Mammary epithelial cell (primary cell): ENCODE measurements at regions of chr18 and their contacts with region 1.

Region 1: DNA sequence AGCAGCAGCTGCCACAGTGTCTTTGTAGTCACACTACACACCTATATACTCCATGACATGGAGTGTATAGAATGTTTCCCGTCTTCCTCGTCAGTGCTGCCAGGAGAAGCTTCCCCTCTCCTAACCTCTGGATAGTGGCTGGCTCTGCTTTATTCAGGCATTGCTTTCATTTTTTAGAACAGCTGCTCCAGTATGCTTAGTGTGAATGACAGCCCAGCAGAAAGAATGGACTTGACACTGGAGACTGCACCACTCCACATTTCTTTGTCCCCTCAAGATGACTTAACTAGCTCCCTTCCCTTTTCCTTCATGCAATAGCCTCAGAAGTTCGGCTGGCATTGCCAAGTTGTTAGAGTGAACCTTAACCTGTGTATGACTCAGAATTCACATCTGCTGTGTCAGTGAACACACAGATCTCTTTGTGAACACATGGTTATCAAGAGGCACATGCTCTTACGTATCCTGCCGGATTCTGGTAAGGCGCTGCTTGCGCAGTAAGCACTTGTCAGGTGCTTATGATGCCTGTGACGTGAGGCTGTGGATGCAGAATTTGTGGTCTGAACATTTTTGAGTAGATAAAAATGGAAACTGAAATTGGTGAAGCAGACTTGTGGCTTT is 73.9 kb downstream of the NEDD4L start:
- DNase-seq: peak; percentile 94
- H3K4me3 ChIP-seq: no peak overlapping the region
- H3K27ac ChIP-seq: peak overlapping the region; percentile 35
- H3K4me1 ChIP-seq: peaks cover 14% of the 10 kb centered on the region
- H3K27me3 ChIP-seq: no peaks in the 10 kb centered on the region
- CTCF ChIP-seq: no peak

Region 2: GRCh38 chr18:57630002-57630753 is 487.7 kb before region 1 on chr18:
- CTCF ChIA-PET with region 1: no interaction called
- dilution Hi-C with region 1: no loop called
- in situ Hi-C with region 1: loop called in 1 of 2 experiments (anchors 25 kb)
- intact Hi-C with region 1: loop called (anchors 1 kb)
- DNase-seq: peak; percentile 93
- H3K4me3 ChIP-seq: peak overlapping the region; percentile 64 to 79 (median 68)
- H3K27ac ChIP-seq: peak overlapping the region; percentile 45
- H3K4me1 ChIP-seq: peaks cover 14% of the 10 kb centered on the region
- H3K27me3 ChIP-seq: no peaks in the 10 kb centered on the region
- CTCF ChIP-seq: peak; percentile 53 to 82

Region 3: GRCh38 chr18:57959278-57959677 is 158.6 kb before region 1 on chr18:
- CTCF ChIA-PET with region 1: interaction called, 9 read pairs
- dilution Hi-C with region 1: no loop called
- in situ Hi-C with region 1: no loop called
- intact Hi-C with region 1: loop called (anchors 1 kb)
- DNase-seq: peak; percentile 72
- H3K4me3 ChIP-seq: no peak overlapping the region
- H3K27ac ChIP-seq: no peak overlapping the region
- H3K4me1 ChIP-seq: no peaks in the 10 kb centered on the region
- H3K27me3 ChIP-seq: no peaks in the 10 kb centered on the region
- CTCF ChIP-seq: peak; percentile 39 to 51

Region 4: DNA sequence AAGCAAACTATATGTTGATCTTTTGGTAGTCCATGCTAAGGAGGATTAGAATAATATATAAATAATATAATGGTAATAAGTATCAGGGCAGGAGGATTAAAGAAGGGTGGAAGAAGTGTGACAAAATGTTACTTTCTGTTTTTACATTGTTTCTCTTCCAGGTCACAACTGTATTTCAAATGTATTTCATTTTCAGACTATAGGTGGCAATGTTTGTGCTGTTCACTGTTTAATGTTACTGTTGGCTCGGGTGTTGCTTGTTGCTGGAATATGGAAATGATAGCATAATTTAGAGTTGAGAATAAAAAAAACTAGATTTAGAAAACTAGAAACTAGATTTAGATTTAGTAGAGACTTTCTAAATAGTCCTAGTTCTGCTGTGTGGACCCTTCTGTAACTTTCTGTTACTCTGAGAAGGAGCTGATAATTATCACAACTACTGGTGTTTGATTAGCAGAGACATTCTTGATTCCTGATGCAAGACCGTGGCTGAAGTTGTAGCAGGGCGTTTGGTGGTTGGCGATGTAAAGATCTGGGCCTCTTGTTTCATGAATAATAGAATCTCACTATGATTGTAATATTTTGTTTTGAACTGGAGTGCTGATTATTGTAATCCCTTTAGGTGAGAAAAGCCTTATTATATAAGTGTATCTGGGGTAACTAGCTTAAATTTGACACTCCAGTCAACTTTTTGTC is 66.0 kb before region 1 on chr18:
- CTCF ChIA-PET with region 1: no interaction called
- dilution Hi-C with region 1: loop called (anchors 5 kb)
- in situ Hi-C with region 1: loop called (anchors 5 kb)
- intact Hi-C with region 1: no loop called
- DNase-seq: peak; percentile 32
- H3K4me3 ChIP-seq: no peak overlapping the region
- H3K27ac ChIP-seq: no peak overlapping the region
- H3K4me1 ChIP-seq: peaks cover 25% of the 10 kb centered on the region
- H3K27me3 ChIP-seq: no peaks in the 10 kb centered on the region
- CTCF ChIP-seq: peak; percentile 29 to 45

Region 5: DNA sequence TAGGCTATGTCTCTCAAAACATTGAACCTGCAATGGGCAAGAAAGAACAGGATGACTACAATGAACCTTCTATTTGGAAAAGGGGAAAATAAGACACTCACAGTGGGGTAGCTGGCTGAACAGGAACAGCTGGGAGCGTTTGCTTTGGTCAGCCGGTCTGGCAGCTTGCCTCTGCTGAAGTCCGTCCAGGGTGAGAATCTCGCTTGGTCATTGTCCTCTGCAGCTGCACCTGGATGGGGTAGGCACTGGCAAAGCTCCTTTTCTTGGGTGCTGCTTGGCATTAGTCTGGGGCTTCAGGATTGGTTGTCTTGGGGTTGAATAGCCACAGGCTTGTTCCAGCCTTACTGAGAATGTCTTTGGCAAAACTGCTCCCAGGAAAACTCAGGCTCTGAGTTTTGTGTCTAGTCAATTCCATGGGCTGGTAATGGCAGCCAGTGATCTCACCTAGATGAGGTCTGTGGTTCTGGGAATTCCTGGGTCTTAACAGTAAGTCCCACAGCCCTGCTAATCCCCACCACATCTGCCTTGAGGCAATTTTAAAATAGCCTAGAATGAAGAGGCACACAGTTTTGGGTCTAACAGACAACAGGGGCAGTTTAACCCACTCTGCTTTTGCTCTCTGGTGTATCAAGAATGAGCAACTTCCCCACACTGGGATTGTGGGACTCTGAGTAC is 60.5 kb before region 1 on chr18:
- CTCF ChIA-PET with region 1: no interaction called
- dilution Hi-C with region 1: loop called (anchors 5 kb)
- in situ Hi-C with region 1: loop called in 1 of 2 experiments (anchors 5 kb)
- intact Hi-C with region 1: no loop called
- DNase-seq: peak; percentile 73
- H3K4me3 ChIP-seq: no peak overlapping the region
- H3K27ac ChIP-seq: no peak overlapping the region
- H3K4me1 ChIP-seq: peaks cover 24% of the 10 kb centered on the region
- H3K27me3 ChIP-seq: no peaks in the 10 kb centered on the region
- CTCF ChIP-seq: no peak